IMR-90 (cell line): ENCODE measurements at regions of chr2 and their contacts with region 1.

Region 1: GRCh38 chr2:227871375-227871788 is at the start of gene DAW1:
- DNase-seq: peak; percentile 56
- ATAC-seq: peak; percentile 83
- H3K4me3 ChIP-seq: peak within 1 kb of the TSS; percentile 45
- H3K27ac ChIP-seq: peak within 1 kb of the TSS; percentile 78
- H3K4me1 ChIP-seq: peaks cover 7% of the 10 kb centered on the region
- H3K27me3 ChIP-seq: no peaks in the 10 kb centered on the region
- CTCF ChIP-seq: no peak
- POLR2A ChIP-seq: 0 out of 2 replicates have a peak, but pooled peaks have one; percentile 25
- RAD21 ChIP-seq: no peak
- total RNA-seq, gene DAW1: 1.4 TPM in 2 replicates

Region 2: DNA sequence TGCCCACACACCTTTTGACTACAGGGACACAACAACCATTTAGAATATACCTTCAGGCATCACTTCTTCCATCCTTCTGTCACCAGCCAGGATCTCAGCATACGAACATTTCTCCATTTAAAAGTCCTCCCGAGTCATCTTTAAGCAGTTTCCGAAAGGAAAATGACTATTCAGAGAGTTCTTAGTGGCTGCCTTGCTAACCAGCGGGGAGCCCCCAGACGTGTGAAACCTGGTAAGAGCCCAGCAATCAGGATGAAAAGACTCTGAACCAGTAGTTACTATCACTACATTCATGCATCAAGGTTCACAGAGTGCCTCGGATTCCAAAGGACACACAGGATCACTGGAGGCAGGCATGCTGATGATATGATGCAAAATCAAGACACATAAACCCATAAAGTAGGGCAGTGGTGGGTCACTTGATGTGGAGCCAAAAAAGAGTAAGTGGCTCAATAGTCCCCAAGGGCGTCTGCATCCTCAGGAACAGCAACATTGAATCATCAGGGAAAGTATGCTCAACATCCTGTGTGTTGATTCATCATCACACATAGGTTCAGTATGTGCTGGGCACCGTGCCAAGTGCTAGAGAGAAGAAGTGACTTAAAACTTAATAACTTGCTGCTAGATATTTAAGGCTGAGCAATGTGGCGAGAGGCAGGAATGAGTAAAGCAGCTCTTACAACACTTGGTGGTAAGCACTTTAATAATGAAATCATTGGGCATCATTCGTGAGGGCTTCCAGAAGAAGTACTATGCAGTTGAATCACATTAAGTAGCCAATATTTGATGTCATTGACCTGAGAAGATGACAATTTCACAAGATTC is 53.3 kb before region 1 on chr2:
- CTCF ChIA-PET with region 1: no interaction called
- POLR2A ChIA-PET with region 1: no interaction called
- dilution Hi-C with region 1: no loop called
- in situ Hi-C with region 1: no loop called
- intact Hi-C with region 1: loop called (anchors 2 kb)
- DNase-seq: peak; percentile 100
- ATAC-seq: peak; percentile 89
- H3K4me3 ChIP-seq: peak overlapping the region; percentile 2; the same call in 1 of the 2 replicates
- H3K27ac ChIP-seq: peak overlapping the region; percentile 18
- H3K4me1 ChIP-seq: peaks cover 3% of the 10 kb centered on the region; the same call in 1 of the 2 replicates
- H3K27me3 ChIP-seq: no peaks in the 10 kb centered on the region
- CTCF ChIP-seq: 0 out of 2 replicates have a peak, but pooled peaks have one; percentile 16
- POLR2A ChIP-seq: peak; percentile 32; the same call in 1 of the 2 replicates
- RAD21 ChIP-seq: no peak

Region 3: GRCh38 chr2:227908261-227909054 is 37.1 kb after region 1 on chr2:
- CTCF ChIA-PET with region 1: no interaction called
- POLR2A ChIA-PET with region 1: no interaction called
- dilution Hi-C with region 1: no loop called
- in situ Hi-C with region 1: no loop called
- intact Hi-C with region 1: no loop called
- DNase-seq: peak; percentile 46
- ATAC-seq: no peak
- H3K4me3 ChIP-seq: no peak overlapping the region
- H3K27ac ChIP-seq: no peak overlapping the region
- H3K4me1 ChIP-seq: no peaks in the 10 kb centered on the region
- H3K27me3 ChIP-seq: no peaks in the 10 kb centered on the region
- CTCF ChIP-seq: no peak
- POLR2A ChIP-seq: no peak
- RAD21 ChIP-seq: no peak